ENCODE measurements at regions of chr13 and their contacts with region 1.

Region 1: DNA sequence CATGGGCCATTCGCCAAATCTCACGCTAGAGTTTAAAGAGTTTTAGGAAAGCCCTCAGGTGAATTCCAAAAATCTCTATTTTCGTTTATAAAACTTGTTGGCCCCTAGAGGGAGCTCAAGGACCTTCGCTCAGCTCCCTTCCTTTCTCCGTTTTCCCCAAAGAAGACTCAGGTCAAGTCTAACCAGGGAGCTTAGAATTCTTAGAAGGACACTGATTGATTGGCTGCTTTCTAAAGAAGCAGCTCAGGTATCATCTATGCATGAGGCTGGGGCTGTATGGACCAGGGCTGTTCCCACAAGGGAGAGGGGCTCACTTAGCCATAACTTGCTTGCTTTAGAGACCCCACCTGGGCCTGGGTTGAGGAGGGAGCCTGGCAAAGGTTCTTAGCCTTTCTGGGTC is 20.5 kb downstream of the DZIP1 start:
- DNase-seq: no peak
- H3K4me3 Mint-ChIP-seq: no peak overlapping the region
- H3K27ac Mint-ChIP-seq: no peak overlapping the region
- H3K4me1 Mint-ChIP-seq: no peaks in the 10 kb centered on the region
- H3K27me3 Mint-ChIP-seq: peaks cover 12% of the 10 kb centered on the region

Region 2: GRCh38 chr13:95530178-95530577 is 93.8 kb before region 1 on chr13:
- intact Hi-C with region 1: no loop called
- DNase-seq: no peak
- H3K4me3 Mint-ChIP-seq: no peak overlapping the region
- H3K27ac Mint-ChIP-seq: no peak overlapping the region
- H3K4me1 Mint-ChIP-seq: peaks cover 4% of the 10 kb centered on the region
- H3K27me3 Mint-ChIP-seq: peaks cover 2% of the 10 kb centered on the region

Region 3: GRCh38 chr13:95644601-95645052 is 20.6 kb after region 1 on chr13 and contains the start of gene DZIP1:
- intact Hi-C with region 1: loop called (anchors 2 kb)
- DNase-seq: no peak
- H3K4me3 Mint-ChIP-seq: peak within 1 kb of the TSS; percentile 64
- H3K27ac Mint-ChIP-seq: no peak within 1 kb of the TSS
- H3K4me1 Mint-ChIP-seq: peaks cover 4% of the 10 kb centered on the region
- H3K27me3 Mint-ChIP-seq: peaks cover 55% of the 10 kb centered on the region
- total RNA-seq, gene DZIP1: 0.48 and 0.64 TPM in 2 replicates

Region 4: DNA sequence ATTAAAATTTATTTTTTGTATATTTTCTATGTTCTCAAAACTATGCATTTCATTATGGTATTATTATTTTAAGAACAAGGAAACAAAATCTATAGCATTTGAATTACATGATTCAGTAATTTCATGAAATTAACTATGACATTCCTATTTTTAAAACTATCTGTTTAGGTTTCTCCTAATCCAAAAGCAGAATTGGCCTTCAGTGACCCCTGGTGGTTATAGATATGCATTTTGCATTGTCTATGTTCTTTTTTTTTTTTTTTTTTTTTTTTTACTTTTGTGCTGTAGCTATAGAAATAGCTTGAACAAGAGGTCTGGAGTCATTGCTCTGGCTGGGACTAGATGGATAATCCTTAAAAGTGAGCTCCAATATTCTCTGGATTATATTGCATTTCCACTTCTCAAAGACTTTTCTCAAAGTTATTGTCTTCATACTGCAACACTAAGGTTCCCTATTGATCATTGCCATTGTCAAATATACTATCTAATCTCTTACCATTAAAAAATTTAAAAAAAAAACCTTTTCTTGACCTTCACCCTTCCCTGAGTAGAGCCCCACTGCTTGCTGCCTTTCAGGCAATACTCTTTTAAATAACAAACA is 37.1 kb after region 1 on chr13:
- intact Hi-C with region 1: loop called (anchors 1 kb)
- DNase-seq: no peak
- H3K4me3 Mint-ChIP-seq: no peak overlapping the region
- H3K27ac Mint-ChIP-seq: no peak overlapping the region
- H3K4me1 Mint-ChIP-seq: no peaks in the 10 kb centered on the region
- H3K27me3 Mint-ChIP-seq: peaks cover 23% of the 10 kb centered on the region

Region 5: GRCh38 chr13:95834134-95834765 is 210.2 kb after region 1 on chr13:
- intact Hi-C with region 1: loop called (anchors 1 kb)
- DNase-seq: peak; percentile 34
- H3K4me3 Mint-ChIP-seq: no peak overlapping the region
- H3K27ac Mint-ChIP-seq: no peak overlapping the region
- H3K4me1 Mint-ChIP-seq: no peaks in the 10 kb centered on the region
- H3K27me3 Mint-ChIP-seq: peaks cover 7% of the 10 kb centered on the region